Activated naive CD4-positive, alpha-beta T cell treated with anti-CD3 and anti-CD28 coated beads for 36 hours (primary cell): ENCODE measurements at regions of chr19 and their contacts with region 1.

Region 1: DNA sequence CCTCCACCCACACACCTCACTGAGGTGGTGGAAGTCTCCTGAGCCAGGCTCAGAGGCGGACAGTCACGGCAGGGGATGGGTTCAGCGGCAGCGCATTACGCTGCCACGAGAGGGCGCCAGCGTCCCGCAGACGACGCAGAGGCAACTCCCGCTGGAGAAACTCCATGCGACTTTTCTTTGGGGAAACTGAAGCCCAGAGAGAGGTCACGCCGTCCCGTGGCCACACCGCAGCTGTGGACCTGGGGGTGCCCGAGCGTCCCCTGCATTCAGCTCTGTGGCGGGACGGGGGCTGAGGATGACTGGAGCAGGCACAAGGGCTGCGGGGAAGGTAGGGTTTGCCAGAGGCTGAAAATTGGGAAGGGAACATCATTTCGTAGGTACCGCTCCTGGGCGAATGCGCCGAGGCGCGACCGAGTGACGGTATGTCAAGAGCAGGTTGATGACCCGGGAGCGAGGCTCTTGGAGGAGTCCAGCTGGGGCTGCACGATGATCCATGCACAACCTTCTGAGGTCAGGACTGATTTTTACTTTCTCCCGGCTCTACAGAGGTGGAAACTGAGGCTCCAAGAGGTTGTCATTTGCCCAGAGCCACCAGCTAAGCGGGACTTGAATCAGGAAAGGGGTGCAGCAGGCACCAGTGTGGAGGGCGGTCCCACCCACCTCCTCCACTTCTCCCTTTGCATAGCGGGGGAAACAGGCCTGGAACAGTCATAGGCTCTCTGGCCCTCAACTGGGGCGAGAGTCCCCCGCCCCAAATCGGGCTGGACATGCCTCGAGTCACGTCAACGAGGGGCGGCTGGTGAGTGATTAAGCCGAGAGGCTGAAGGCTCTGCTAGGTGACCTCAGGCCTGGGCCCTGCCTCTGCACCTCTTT is 690 bp upstream of the ARRDC2 start:
- DNase-seq: peak; percentile 84
- H3K4me3 Mint-ChIP-seq: peak overlapping the region; percentile 75
- H3K27ac Mint-ChIP-seq: peak overlapping the region; percentile 81
- H3K4me1 Mint-ChIP-seq: peaks cover 48% of the 10 kb centered on the region
- H3K27me3 Mint-ChIP-seq: no peaks in the 10 kb centered on the region

Region 2: GRCh38 chr19:18021121-18021755 is 14.0 kb after region 1 on chr19:
- CTCF ChIA-PET with region 1: interaction called, 7 read pairs
- intact Hi-C with region 1: loop called (anchors 2 kb)
- DNase-seq: peak; percentile 80
- H3K4me3 Mint-ChIP-seq: peak overlapping the region; percentile 78
- H3K27ac Mint-ChIP-seq: peak overlapping the region; percentile 79
- H3K4me1 Mint-ChIP-seq: peaks cover 64% of the 10 kb centered on the region
- H3K27me3 Mint-ChIP-seq: no peaks in the 10 kb centered on the region

Region 3: GRCh38 chr19:18058208-18059030 is 51.1 kb after region 1 on chr19:
- CTCF ChIA-PET with region 1: interaction called, 148 read pairs
- intact Hi-C with region 1: loop called (anchors 1 kb)
- DNase-seq: peak; percentile 86
- H3K4me3 Mint-ChIP-seq: no peak overlapping the region
- H3K27ac Mint-ChIP-seq: peak overlapping the region; percentile 59
- H3K4me1 Mint-ChIP-seq: peaks cover 11% of the 10 kb centered on the region
- H3K27me3 Mint-ChIP-seq: no peaks in the 10 kb centered on the region

Region 4: GRCh38 chr19:18152444-18152816 is 145.2 kb after region 1 on chr19:
- CTCF ChIA-PET with region 1: no interaction called
- intact Hi-C with region 1: loop called (anchors 2 kb)
- DNase-seq: peak; percentile 100
- H3K4me3 Mint-ChIP-seq: peak overlapping the region; percentile 79
- H3K27ac Mint-ChIP-seq: peak overlapping the region; percentile 93
- H3K4me1 Mint-ChIP-seq: peaks cover 22% of the 10 kb centered on the region
- H3K27me3 Mint-ChIP-seq: no peaks in the 10 kb centered on the region